ENCODE measurements at regions of chr21 and their contacts with region 1.

Region 1: DNA sequence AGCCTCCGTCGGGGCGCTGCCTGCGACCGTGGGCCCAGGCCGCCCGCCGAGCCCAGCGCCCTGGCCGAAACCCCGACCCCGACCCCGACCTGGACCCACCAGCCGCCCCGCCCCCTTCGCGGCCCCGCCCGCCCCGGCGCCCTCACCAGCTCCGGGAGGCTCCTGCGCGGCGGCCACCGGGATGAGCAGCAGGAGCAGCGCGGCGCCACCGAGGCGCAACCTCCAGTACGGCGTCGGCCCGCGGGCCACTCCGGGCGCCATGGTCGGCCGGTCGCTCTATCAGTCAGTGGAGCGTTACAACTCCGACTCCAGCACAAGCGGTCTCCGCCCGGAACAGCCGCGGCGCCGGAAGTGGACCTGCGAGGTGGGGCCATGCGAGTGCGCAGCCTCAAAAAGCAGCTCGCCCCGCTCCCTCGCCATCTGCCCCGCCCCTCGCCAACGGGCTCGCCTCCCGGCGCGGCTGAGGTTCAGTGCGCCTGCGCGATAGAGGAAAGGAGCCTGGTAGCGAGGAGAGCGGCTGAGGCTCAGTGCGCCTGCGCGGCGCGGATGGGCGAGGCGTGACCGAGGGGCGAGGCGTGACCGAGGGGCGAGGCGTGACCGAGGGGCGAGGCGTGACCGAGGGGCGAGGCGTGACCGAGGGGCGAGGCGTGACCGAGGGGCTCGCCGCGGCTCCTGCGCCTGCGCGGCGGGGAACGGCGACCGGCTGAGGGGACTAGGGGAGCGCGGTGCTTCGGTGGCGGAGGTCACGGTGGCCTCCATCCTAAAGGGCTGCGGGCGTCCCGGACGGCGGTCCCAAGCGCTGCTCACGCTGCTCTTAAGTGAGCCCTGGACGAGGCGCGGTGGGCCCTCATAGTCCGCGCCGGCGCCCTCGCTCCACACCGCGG is at the start of gene PTTG1IP:
- DNase-seq: peak; percentile 100
- H3K4me3 Mint-ChIP-seq: peak within 1 kb of the TSS; percentile 89
- H3K27ac Mint-ChIP-seq: peak within 1 kb of the TSS; percentile 83
- H3K4me1 Mint-ChIP-seq: peaks cover 49% of the 10 kb centered on the region
- H3K27me3 Mint-ChIP-seq: no peaks in the 10 kb centered on the region
- total RNA-seq, gene PTTG1IP: 43.0 to 44.4 TPM

Region 2: GRCh38 chr21:44510508-44511210 is 362.9 kb before region 1 on chr21:
- CTCF ChIA-PET with region 1: interaction called, 12 read pairs
- POLR2A ChIA-PET with region 1: no interaction called
- intact Hi-C with region 1: no loop called
- DNase-seq: peak; percentile 82
- H3K4me3 Mint-ChIP-seq: no peak overlapping the region
- H3K27ac Mint-ChIP-seq: no peak overlapping the region
- H3K4me1 Mint-ChIP-seq: no peaks in the 10 kb centered on the region
- H3K27me3 Mint-ChIP-seq: no peaks in the 10 kb centered on the region

Region 3: DNA sequence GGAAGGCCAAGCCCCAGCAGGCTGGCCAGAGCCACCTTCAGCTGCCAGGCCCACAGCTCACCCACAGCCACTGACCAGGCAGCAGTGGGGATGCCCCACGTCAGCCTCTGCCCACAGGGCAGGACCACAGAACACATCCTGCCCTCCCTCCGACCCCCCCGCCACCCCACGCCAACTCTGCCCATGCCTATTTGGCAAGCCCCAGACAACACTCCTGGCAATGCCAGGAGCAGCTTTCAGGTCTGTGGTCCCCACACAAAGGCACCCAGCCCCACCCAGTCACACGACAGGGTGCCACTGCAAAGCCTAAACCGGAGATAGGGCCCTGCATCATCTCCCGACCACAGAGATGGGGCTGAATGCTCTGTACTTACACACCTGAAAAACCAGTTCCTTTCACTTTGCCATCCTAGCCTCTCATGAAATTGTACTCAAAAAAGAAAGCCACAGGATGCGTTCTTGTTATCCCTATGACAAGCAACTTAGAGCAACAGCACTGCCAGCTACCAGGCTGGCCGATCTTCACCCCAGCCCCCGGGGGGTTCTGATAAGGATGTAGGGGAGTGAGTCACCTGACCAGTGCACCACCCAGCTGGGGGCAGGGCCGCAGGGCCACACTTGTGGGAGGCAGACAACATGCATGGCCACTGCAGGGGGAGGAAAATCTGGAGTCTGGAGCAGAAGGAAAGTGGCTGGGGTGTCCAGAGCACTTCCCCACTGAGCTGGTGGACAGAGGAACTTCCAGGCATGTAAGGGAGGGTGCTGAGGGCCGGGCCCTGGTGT is 108.2 kb before region 1 on chr21:
- CTCF ChIA-PET with region 1: no interaction called
- POLR2A ChIA-PET with region 1: no interaction called
- intact Hi-C with region 1: no loop called
- DNase-seq: peak; percentile 50
- H3K4me3 Mint-ChIP-seq: peak overlapping the region; percentile 26
- H3K27ac Mint-ChIP-seq: peak overlapping the region; percentile 65
- H3K4me1 Mint-ChIP-seq: peaks cover 17% of the 10 kb centered on the region
- H3K27me3 Mint-ChIP-seq: no peaks in the 10 kb centered on the region

Region 4: DNA sequence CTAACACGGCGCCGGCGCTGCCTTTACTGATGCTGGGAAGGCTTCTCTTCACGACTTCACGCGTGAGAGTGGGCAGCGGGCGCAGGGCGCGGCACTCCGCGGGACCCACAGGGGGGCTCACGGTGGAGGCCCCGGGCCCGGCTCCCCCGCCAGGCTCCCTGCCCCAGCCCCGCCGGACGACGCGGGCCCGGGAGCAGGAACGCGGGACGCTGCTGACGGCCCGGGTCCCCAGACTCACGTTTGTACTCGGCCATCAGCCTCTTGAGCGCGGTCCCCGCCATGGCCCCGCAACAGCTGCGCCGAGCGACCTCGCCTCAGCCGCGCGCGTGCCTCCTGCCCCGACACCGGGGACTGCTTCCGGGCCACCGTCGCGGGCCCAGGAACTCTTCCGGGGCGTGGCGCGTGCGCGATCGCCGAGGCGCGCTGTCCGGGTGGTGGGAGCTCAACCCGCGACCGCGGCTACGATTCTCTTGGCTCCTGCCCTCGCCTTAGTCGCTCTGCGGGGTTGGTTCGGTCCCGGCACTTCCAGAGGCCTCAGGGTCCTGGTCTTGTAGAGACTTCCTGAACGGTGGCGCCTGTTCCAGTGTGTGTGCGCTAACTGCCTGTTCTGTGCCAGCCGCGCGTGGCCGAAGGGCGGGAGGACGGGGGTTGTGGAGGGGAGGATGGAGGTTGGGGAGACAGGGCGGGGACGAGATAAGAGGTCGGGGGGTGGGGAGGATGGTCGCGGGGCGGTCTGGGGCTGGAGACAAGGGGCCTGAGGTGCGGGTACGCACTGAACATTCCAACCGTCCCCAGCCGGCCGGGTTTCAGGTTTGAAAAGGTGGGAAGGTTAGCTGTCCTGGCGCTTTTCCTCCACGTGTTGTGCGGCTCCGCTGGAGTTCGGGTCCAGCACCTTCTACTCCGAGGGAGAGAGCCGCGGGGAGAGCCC is 71.9 kb before region 1 on chr21 and contains the start of gene UBE2G2:
- CTCF ChIA-PET with region 1: interaction called, 100 read pairs
- POLR2A ChIA-PET with region 1: interaction called, 8 read pairs
- intact Hi-C with region 1: loop called (anchors 1 kb)
- DNase-seq: peak; percentile 91
- H3K4me3 Mint-ChIP-seq: peak within 1 kb of the TSS; percentile 99
- H3K27ac Mint-ChIP-seq: peak within 1 kb of the TSS; percentile 89
- H3K4me1 Mint-ChIP-seq: peaks cover 54% of the 10 kb centered on the region
- H3K27me3 Mint-ChIP-seq: no peaks in the 10 kb centered on the region
- total RNA-seq, gene UBE2G2: 87.6 to 96.0 TPM

Region 5: GRCh38 chr21:44892536-44893277 is 19.1 kb after region 1 on chr21:
- CTCF ChIA-PET with region 1: interaction called, 16 read pairs
- POLR2A ChIA-PET with region 1: no interaction called
- intact Hi-C with region 1: no loop called
- DNase-seq: peak; percentile 86
- H3K4me3 Mint-ChIP-seq: no peak overlapping the region
- H3K27ac Mint-ChIP-seq: peak overlapping the region; percentile 54
- H3K4me1 Mint-ChIP-seq: peaks cover 13% of the 10 kb centered on the region
- H3K27me3 Mint-ChIP-seq: no peaks in the 10 kb centered on the region

Region 6: GRCh38 chr21:44927587-44928461 is 54.2 kb after region 1 on chr21:
- CTCF ChIA-PET with region 1: interaction called, 8 read pairs
- POLR2A ChIA-PET with region 1: interaction called, 5 read pairs
- intact Hi-C with region 1: loop called (anchors 2 kb)
- DNase-seq: peak; percentile 96
- H3K4me3 Mint-ChIP-seq: peak overlapping the region; percentile 85
- H3K27ac Mint-ChIP-seq: peak overlapping the region; percentile 96
- H3K4me1 Mint-ChIP-seq: peaks cover 74% of the 10 kb centered on the region
- H3K27me3 Mint-ChIP-seq: no peaks in the 10 kb centered on the region

Region 7: GRCh38 chr21:45228171-45228641 is 354.6 kb after region 1 on chr21:
- CTCF ChIA-PET with region 1: no interaction called
- POLR2A ChIA-PET with region 1: no interaction called
- intact Hi-C with region 1: no loop called
- DNase-seq: peak; percentile 90
- H3K4me3 Mint-ChIP-seq: peak overlapping the region; percentile 23
- H3K27ac Mint-ChIP-seq: peak overlapping the region; percentile 66
- H3K4me1 Mint-ChIP-seq: peaks cover 48% of the 10 kb centered on the region
- H3K27me3 Mint-ChIP-seq: peaks cover 7% of the 10 kb centered on the region

Region 8: DNA sequence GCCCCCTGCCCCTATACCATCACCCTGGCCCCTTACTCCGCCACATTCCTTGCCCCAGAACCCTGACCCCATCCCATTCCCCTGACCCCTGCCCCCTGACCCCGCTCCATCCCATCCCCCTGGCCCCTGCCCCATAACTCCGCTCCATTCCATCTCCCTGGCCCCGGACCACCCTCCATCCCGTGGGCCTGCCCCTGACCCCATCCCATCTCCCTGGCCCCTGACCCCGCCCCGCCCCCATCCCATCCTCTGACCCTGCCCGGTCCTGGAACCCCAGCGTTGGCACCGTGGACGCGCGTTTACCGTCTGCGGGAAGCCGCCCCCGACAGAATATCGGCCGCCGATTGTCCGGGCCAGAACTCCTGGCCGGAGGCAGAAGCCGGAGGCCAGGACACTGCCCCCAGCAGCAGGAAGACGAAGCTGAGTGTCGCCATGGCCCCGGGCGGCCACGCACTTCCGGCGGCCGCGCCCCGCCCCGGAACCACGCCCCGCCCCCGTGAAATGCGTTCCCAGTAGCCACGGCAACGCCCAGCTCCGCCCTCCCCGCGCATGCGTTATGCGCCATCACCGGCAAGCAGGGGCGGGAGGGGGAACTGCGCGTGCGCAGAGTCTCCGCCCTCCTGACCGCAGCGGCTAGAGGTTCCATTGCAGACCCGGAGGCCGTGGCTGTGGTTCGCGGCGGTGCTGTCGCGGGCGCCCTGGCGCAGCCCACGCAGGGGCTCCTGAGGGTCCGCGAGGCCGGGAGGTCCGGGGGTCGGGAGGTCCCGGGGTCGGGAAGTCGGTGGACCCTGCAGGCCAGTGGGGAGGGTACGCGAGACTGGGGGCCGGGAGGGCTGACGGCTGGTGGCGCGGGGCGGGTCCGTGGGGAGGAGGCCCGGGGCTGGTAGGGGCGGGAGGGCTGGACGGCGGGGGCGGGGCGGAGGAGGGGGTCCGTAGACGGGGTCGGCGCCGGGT is 414.1 kb after region 1 on chr21 and contains the start of gene POFUT2:
- CTCF ChIA-PET with region 1: no interaction called
- POLR2A ChIA-PET with region 1: no interaction called
- intact Hi-C with region 1: loop called (anchors 2 kb)
- DNase-seq: peak; percentile 99
- H3K4me3 Mint-ChIP-seq: peak within 1 kb of the TSS; percentile 77
- H3K27ac Mint-ChIP-seq: peak within 1 kb of the TSS; percentile 69
- H3K4me1 Mint-ChIP-seq: peaks cover 24% of the 10 kb centered on the region
- H3K27me3 Mint-ChIP-seq: no peaks in the 10 kb centered on the region
- total RNA-seq, gene POFUT2: 14.3 TPM